Aorta (tissue), 5 donors: ENCODE measurements at regions of chr11 and their contacts with region 1.

Region 1: GRCh38 chr11:68383976-68384501 is 71.6 kb downstream of the LRP5 start:
- DNase-seq: peak; percentile 77 to 92
- ATAC-seq: no peak
- H3K4me3 ChIP-seq: no peak overlapping the region
- H3K27ac ChIP-seq: no peak overlapping the region
- H3K4me1 ChIP-seq: peaks cover 0 to 2% of the 10 kb centered on the region in 2 donors
- H3K27me3 ChIP-seq: no peaks in the 10 kb centered on the region

Region 2: DNA sequence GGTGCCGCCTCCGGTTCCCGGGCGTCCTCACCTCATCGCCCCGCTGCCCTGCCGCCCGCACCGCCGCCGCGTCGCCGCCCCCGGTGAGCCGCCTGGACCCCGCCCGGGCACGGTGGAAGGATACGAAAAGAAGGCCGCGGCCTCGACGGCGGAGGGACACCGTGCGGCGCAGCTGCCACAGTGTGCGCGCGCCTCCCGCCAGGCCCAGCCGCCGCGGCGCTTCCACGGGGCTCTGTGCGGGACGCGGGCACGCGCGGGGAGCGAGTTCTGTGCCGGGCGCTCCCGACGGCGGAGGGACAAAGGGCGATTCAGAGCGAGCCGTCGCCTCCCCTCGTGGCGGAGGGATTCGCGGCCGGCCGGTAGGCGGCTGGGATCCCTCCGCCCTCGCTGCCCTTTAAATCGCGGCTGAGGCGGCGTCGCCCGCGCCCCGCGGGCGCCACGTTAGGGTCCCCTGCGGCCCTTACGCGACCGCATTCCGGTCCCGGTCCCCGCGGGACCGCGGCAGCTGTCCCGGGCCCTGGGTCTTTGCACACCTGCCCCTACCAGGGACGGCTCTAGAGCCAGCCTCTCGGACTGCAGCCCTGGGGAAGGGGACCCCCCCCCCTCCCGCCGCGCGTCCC is 170.4 kb before region 1 on chr11:
- intact Hi-C with region 1: loop called in 1 of 2 experiments (anchors 5 kb)
- DNase-seq: peak; percentile 93
- ATAC-seq: peak; percentile 86
- H3K4me3 ChIP-seq: peak overlapping the region; percentile 88 to 91
- H3K27ac ChIP-seq: peak overlapping the region; percentile 93 to 100
- H3K4me1 ChIP-seq: peaks cover 0 to 4% of the 10 kb centered on the region in 2 donors
- H3K27me3 ChIP-seq: no peaks in the 10 kb centered on the region

Region 3: DNA sequence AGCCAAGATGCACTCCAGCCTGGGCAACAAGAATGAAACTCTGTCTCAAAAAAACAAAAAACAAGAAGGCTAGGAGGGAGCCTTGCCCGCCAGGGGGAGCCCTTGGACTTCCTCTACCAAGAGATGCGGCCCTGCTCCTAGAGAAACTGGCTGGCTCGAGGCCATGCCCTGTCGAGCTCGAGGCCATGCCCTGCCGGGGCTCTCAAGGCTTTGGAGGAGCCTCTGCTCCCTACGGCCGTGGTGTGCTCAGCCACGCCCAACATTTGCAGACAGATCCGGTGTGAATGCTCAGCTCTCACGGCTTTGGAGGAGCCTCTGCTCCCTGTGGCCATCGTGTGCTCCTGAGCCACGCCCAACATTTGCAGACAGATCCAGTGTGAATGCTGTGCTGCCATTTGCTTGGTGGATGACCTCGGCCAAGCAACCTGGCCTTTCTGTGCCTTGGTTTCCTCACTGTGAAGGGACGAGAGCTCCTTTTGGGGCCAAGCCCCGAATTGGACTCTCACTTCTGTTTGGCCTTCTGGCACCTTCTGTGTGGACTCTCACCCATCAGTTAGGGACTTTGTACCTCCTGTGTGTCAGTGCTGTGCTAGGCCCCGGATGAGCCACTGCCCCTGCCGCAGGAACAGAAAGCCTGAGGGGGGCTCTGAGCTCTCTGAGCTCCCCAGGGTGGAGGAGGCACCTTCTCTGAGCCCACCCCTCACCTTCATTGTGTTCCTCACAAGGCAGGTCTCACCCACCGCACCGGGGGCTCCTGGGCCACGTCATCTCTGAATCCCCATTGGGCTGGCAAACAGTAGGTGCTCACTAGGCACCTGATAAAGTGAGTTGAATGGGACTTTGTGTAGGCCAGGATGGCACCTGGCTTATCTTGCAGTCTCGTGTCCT is 126.3 kb before region 1 on chr11:
- intact Hi-C with region 1: loop called (anchors 2 to 5 kb)
- DNase-seq: peak; percentile 98 to 99
- ATAC-seq: peak; percentile 89
- H3K4me3 ChIP-seq: no peak overlapping the region
- H3K27ac ChIP-seq: no peak overlapping the region
- H3K4me1 ChIP-seq: no peaks in the 10 kb centered on the region
- H3K27me3 ChIP-seq: no peaks in the 10 kb centered on the region

Region 4: DNA sequence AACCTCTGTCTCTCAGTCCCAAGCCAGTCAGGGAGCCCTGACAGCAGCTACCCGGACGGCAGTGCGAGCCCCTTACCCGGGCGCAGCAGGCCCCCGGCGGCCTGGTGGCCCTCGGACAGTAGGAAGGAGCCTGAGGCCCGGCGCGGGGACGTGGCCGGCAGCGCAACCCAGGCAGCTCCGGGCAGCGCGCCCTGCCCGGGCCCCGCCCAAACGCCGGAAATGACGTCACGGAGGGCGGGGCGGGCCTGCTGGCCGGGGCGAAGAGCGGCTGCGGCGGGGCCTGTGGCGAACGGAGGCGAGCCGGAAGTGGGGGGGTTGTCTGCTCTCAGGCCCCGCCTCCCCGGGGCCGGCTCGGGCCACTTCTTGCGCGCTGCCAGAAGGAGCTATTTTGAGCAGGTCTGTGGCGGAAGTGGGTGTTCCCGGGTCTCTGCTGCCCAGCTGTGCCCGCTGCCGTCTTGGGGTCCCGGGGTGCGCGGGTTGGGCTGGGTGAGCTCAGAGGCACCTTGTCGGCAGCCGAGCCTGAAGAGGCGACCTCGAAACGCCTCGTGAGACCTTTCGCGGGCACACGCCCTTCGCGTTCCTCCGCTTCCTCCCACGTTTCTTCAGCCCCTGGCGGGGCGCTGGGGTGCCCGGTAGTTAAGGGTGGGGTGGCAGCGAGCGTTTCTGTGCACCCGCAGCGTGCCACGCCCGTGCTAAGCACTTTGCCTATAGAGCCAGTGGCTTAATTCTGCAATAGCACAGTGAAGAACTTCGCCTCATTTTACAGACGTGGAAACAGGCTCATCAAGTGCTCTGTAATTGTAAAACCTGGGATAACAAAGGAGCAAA is 112.0 kb before region 1 on chr11 and contains the start of gene C11orf24:
- intact Hi-C with region 1: loop called in 1 of 2 experiments (anchors 1 kb)
- DNase-seq: peak; percentile 97 to 98
- ATAC-seq: peak; percentile 98
- H3K4me3 ChIP-seq: peak within 1 kb of the TSS; percentile 75 to 79
- H3K27ac ChIP-seq: peak within 1 kb of the TSS; percentile 87 to 90
- H3K4me1 ChIP-seq: peaks cover 0 to 3% of the 10 kb centered on the region in 2 donors
- H3K27me3 ChIP-seq: no peaks in the 10 kb centered on the region
- total RNA-seq, gene C11orf24: 48.9 to 65.5 TPM

Region 5: DNA sequence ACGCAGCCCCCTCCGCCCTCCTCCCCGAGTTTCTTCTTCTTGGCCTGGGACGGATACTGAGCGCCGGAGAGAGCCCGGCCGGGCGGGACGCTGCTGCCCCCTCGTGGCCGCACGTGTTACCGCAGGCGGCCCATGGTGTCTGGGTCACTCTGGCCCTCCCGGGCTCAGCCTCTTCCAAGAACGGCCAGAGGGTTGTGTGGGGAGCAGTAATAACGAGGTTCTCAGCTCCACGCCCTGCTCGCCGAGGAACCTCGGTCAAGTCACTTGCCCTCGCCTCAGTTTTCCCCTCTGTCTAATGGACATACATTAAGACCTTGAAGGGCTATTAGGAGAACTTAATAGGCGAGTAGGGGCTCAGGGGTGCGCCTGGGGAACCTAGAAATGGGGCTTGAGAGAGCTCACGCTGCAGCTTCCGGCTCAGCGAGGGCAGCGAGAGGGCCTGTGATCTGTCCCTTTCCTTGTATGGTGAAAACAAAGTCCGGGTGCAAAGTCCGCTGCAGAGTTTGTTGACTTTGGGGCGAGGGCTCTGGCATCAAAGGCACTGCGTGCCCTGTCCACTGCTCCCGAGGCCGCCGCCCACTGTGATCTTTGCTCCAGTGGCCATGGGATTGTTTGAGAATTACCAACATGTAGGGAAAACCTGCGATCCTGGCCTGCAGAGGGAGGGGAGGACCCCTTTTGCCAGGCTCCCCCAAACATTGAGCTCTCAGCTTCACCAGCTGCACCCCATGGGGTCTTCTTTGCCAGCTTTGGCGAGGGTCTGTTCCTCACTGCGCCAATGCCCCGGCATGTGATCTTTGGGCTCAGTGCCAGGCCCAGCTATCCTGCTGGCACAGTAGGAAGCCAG is 86.0 kb before region 1 on chr11:
- intact Hi-C with region 1: loop called in 1 of 2 experiments (anchors 5 kb)
- DNase-seq: peak; percentile 84 to 94
- ATAC-seq: peak; percentile 97
- H3K4me3 ChIP-seq: no peak overlapping the region
- H3K27ac ChIP-seq: no peak overlapping the region
- H3K4me1 ChIP-seq: no peaks in the 10 kb centered on the region
- H3K27me3 ChIP-seq: no peaks in the 10 kb centered on the region

Region 6: GRCh38 chr11:68312117-68312779 is 71.8 kb before region 1 on chr11 and contains the start of gene LRP5:
- intact Hi-C with region 1: loop called (anchors 2 to 5 kb)
- DNase-seq: no peak
- ATAC-seq: no peak
- H3K4me3 ChIP-seq: peak within 1 kb of the TSS; percentile 16 to 97
- H3K27ac ChIP-seq: peak within 1 kb of the TSS; percentile 38 to 61
- H3K4me1 ChIP-seq: no peaks in the 10 kb centered on the region
- H3K27me3 ChIP-seq: no peaks in the 10 kb centered on the region
- total RNA-seq, gene LRP5: 85.9 to 103 TPM

Region 7: DNA sequence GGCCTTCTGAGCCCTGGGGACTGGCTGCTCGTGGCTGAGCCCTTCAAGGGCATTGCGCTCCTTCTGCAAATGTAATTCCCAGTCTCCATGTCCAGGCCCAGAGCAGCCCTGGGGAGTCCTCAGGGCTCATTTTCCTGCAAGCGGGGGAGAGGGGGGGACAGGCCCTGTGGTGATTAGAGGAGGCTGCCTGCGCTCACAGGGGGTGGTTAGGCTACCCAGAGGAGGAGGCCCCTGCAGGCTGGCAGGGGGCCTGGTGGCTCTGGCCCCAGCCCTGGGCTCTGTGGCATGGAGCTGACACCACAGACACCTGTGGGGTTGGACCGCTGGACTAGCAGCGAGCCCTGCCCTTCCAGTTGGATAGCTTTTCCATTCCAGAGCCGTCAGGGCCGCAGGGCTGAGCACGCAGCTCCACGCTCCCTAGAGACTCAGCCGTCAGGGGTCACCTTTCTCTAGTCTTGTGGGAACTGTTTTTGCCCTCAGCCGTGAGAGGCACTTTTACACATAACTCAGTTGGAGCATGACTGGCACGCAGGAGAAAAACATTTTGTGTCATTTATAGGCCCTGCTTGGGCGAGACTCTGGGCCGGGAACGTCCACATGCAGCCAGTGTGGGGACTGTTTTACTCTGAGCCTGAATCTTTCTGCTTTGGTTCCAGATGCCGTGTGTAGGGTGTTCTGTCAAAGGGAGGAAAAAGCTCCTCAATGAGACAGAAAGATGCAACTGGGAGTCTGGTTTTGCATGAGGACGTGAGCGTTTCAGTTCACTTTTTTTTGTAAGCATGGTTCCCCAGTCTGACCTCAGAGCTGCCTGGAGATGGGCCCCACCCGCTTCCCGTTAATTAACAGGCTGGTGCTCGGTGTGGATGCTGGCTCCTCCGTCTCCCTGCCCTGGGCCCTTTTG is 13.6 kb before region 1 on chr11:
- intact Hi-C with region 1: no loop called
- DNase-seq: peak; percentile 73 to 77
- ATAC-seq: peak; percentile 54
- H3K4me3 ChIP-seq: no peak overlapping the region
- H3K27ac ChIP-seq: peak overlapping the region; percentile 44 to 87
- H3K4me1 ChIP-seq: peaks cover 0 to 3% of the 10 kb centered on the region in 2 donors
- H3K27me3 ChIP-seq: no peaks in the 10 kb centered on the region